Activated B cell treated with CpG ODN at 0.5 μM for 24 hours (primary cell): ENCODE measurements at regions of chr1 and their contacts with region 1.

Region 1: DNA sequence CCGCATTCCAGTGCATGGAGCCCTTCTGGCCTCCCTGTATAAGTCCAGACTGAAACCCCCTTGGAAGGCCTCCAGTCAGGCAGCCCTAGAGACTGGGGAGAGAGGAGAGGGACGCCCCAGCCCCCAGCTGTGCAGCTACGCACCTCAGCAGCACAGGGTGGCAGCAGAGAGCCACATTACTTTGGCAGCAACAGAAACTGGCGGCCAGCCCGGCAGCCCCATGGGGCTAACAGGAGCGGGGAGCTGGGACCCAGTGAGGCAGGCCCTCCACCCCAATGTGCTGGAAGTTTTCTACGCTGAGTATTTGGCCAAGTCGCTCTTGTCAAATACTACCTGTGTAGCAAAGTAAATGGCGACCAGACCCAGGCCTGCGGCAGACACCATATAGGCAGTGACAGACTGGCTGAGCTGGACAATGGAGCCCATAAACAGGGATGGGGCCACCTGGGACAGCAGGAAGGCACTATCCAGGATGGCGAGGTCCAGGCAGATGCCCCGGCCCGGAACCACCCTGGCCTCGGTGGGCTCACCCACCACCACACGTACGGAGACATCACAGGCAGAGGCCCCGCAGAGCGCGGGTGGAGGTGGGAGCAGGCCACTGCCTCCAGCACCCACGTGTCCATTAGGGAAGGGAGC is 21.2 kb downstream of the SLC45A3 start:
- DNase-seq: peak; percentile 75
- ATAC-seq: peak; percentile 95
- H3K4me3 Mint-ChIP-seq: no peak overlapping the region
- H3K27ac Mint-ChIP-seq: no peak overlapping the region
- H3K4me1 Mint-ChIP-seq: peaks cover 20% of the 10 kb centered on the region
- H3K27me3 Mint-ChIP-seq: no peaks in the 10 kb centered on the region
- CTCF ChIP-seq: peak; percentile 81

Region 2: GRCh38 chr1:205485338-205486228 is 173.5 kb before region 1 on chr1:
- CTCF ChIA-PET with region 1: interaction called, 6 read pairs
- POLR2A ChIA-PET with region 1: no interaction called
- intact Hi-C with region 1: loop called (anchors 1 kb)
- DNase-seq: peak; percentile 47
- ATAC-seq: peak; percentile 80
- H3K4me3 Mint-ChIP-seq: no peak overlapping the region
- H3K27ac Mint-ChIP-seq: no peak overlapping the region
- H3K4me1 Mint-ChIP-seq: peaks cover 29% of the 10 kb centered on the region
- H3K27me3 Mint-ChIP-seq: peaks cover 36% of the 10 kb centered on the region
- CTCF ChIP-seq: peak; percentile 73

Region 3: GRCh38 chr1:205584732-205585131 is 74.3 kb before region 1 on chr1:
- CTCF ChIA-PET with region 1: interaction called, 298 read pairs
- POLR2A ChIA-PET with region 1: no interaction called
- intact Hi-C with region 1: no loop called
- DNase-seq: no peak
- ATAC-seq: no peak
- H3K4me3 Mint-ChIP-seq: no peak overlapping the region
- H3K27ac Mint-ChIP-seq: no peak overlapping the region
- H3K4me1 Mint-ChIP-seq: peaks cover 33% of the 10 kb centered on the region
- H3K27me3 Mint-ChIP-seq: peaks cover 2% of the 10 kb centered on the region
- CTCF ChIP-seq: no peak

Region 4: DNA sequence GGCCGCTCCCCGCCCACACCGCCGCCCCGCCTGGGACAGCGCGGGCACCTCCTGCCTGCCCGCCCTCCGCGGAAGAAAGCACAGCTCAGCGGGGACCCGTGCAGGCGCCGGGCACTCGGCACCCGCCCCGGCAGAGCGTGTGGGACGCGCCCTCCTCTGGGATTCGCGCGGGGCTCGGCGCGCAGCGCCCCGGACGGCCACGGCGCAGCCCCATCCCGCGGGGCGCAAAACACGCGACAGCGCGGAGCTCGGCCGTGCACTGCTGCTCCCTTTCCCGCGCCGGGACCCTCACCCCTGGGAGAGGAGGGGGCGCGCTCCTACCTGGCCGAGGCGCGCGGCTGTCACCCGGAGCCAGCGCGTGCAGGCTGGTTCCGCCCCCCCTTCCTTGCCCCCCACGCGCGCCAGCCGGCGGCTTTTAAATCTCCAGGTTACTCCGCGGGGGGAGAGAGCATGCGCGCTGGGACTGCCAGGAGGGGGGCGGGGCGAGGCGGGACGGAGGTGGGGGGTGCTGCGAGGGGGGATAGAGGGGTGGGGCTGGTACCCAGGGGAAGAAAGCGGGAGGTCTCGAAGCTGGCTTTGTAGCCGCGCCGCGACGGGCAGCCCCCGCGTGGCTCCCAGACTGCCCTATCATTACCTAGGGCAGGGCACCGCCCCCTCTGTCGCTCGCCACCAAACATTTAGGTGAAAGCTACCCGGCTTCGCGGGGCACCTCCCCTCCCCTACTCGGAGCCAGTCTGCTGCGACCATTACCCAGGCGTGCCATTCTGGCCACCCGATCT is 21.2 kb after region 1 on chr1 and contains the start of gene SLC45A3:
- CTCF ChIA-PET with region 1: interaction called, 31 read pairs
- POLR2A ChIA-PET with region 1: interaction called, 5 read pairs
- intact Hi-C with region 1: no loop called
- DNase-seq: no peak
- ATAC-seq: peak; percentile 75
- H3K4me3 Mint-ChIP-seq: peak within 1 kb of the TSS; percentile 85
- H3K27ac Mint-ChIP-seq: peak within 1 kb of the TSS; percentile 46
- H3K4me1 Mint-ChIP-seq: peaks cover 26% of the 10 kb centered on the region
- H3K27me3 Mint-ChIP-seq: peaks cover 2% of the 10 kb centered on the region
- CTCF ChIP-seq: no peak
- total RNA-seq, gene SLC45A3: 6.9 and 7.4 TPM in 2 replicates

Region 5: DNA sequence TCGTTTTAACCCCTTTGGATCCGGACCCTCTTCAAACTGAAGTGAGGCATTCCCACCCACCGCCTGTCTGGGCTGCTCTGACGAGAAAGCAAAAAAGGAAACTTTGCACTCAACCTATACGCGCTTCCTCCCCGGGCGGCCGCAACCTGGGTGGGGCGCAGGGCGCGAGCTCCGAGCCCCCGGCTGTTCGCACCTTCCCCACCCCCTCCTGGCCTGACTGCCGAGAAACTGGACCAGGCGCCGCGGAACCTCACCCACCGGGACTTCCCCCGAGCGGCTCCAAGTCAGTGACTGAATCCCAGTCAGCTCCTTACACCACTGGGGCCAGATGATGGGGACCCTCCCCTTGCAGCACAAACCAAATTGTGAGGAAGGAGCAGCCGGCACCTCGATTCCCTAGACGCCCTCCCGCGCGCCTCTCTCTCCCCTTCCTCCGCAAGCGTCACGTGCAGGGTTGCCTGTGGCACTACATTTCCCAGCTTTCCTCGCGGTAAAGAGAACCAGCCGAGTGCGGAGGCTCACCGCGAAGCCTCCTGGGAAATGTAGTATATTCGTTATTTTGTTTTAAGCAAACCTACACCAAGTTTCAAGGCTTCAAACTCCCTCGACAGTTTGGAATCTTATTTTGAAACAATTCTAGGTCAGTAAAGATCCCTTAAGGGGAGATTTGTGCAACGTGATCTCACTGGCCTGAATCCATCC is 116.1 kb after region 1 on chr1 and contains the start of gene RAB29:
- CTCF ChIA-PET with region 1: interaction called, 8 read pairs
- POLR2A ChIA-PET with region 1: interaction called, 3 read pairs
- intact Hi-C with region 1: loop called (anchors 2 kb)
- DNase-seq: peak; percentile 79
- ATAC-seq: peak; percentile 76
- H3K4me3 Mint-ChIP-seq: peak within 1 kb of the TSS; percentile 93
- H3K27ac Mint-ChIP-seq: peak within 1 kb of the TSS; percentile 98
- H3K4me1 Mint-ChIP-seq: peaks cover 66% of the 10 kb centered on the region
- H3K27me3 Mint-ChIP-seq: no peaks in the 10 kb centered on the region
- CTCF ChIP-seq: no peak
- total RNA-seq, gene RAB29: 149 and 156 TPM in 2 replicates

Region 6: DNA sequence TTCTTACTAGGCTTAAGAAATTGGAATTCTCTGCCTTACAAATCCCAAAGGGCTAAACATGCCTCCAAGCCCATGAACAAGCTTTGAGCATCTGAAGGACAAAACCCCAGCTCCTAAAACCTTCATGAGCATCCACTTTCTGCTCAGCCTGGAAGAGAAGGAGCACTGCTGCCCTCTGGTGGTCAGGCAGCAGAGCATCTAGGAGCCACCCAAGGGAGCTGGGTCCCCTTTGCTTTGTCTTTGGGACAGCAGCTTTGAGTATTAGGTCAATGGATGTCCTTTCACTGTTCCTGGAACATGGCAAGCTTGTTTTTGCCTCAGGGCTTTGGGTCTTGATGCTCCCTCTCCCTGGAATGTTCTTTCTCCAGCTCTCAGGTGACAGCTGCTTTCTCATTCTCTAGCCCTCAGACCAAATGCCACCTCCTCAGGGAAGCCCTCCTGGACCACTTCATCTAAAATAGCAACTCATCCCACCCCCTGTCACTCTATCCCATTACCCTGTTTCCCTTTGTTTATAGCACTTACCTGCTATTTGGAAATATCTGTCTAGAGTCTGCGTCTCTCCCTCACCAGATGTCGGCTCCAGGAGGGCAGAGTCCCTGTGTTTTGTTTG is 318.4 kb after region 1 on chr1:
- CTCF ChIA-PET with region 1: interaction called, 160 read pairs
- POLR2A ChIA-PET with region 1: interaction called, 9 read pairs
- intact Hi-C with region 1: loop called (anchors 1 kb)
- DNase-seq: peak; percentile 65
- ATAC-seq: peak; percentile 95
- H3K4me3 Mint-ChIP-seq: no peak overlapping the region
- H3K27ac Mint-ChIP-seq: no peak overlapping the region
- H3K4me1 Mint-ChIP-seq: no peaks in the 10 kb centered on the region
- H3K27me3 Mint-ChIP-seq: peaks cover 2% of the 10 kb centered on the region
- CTCF ChIP-seq: peak; percentile 83